Transverse colon (tissue), 4 donors: ENCODE measurements at regions of chr19 and their contacts with region 1.

Region 1: GRCh38 chr19:50252111-50252886 is 48.9 kb downstream of the MYH14 start:
- DNase-seq: peak; percentile 26
- H3K4me3 ChIP-seq: no peak overlapping the region
- H3K27ac ChIP-seq: no peak overlapping the region
- H3K4me1 ChIP-seq: no peaks in the 10 kb centered on the region
- H3K27me3 ChIP-seq: no peaks in the 10 kb centered on the region
- CTCF ChIP-seq: peak; percentile 39 to 62 (median 55)
- EP300 ChIP-seq: no peak
- POLR2A ChIP-seq: no peak

Region 2: GRCh38 chr19:49929611-49930482 is 322.5 kb before region 1 on chr19:
- in situ Hi-C with region 1: no loop called
- intact Hi-C with region 1: no loop called
- DNase-seq: peak; percentile 95
- H3K4me3 ChIP-seq: peak overlapping the region; percentile 88 to 99 (median 94)
- H3K27ac ChIP-seq: peak overlapping the region; percentile 94 to 99 (median 96)
- H3K4me1 ChIP-seq: peaks cover 6 to 22% (median 14%) of the 10 kb centered on the region in 4 donors
- H3K27me3 ChIP-seq: no peaks in the 10 kb centered on the region
- CTCF ChIP-seq: peak in 3 of 5 experiments; percentile 11 to 46 (median 41)
- EP300 ChIP-seq: no peak
- POLR2A ChIP-seq: peak; percentile 90

Region 3: DNA sequence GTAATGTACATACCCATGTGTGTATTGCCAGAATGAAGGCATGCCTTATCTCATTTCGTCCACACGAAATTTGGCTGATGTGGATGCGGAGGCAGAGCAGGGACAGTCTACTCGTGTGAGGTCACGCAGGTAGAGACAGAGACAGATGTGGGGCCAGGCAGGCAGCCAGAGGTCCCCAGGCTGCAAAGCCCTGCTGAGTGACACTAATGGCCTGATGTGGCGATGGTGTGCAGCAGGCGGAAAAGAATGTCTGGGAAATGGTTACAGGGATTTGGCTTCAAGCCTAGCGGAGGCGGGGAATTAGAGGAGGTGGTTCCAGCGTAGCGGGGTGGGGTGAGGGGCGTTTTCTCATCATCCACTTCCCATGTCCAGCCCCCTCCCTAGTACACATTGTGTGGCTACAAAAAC is 85.0 kb before region 1 on chr19:
- in situ Hi-C with region 1: loop called in 1 of 4 experiments (anchors 25 kb)
- intact Hi-C with region 1: no loop called
- DNase-seq: peak; percentile 67
- H3K4me3 ChIP-seq: no peak overlapping the region
- H3K27ac ChIP-seq: peak overlapping the region in 3 of 4 donors; percentile 15 to 49 (median 38)
- H3K4me1 ChIP-seq: peaks cover 0 to 29% (median 11%) of the 10 kb centered on the region in 4 donors
- H3K27me3 ChIP-seq: peaks cover 16% of the 10 kb centered on the region
- CTCF ChIP-seq: no peak
- EP300 ChIP-seq: no peak
- POLR2A ChIP-seq: no peak

Region 4: GRCh38 chr19:50476224-50476942 is 224.1 kb after region 1 on chr19 and contains the starts of genes EMC10 and GARIN5A:
- in situ Hi-C with region 1: no loop called
- intact Hi-C with region 1: no loop called
- DNase-seq: peak; percentile 94
- H3K4me3 ChIP-seq: peak within 1 kb of the TSS; percentile 76 to 96 (median 79)
- H3K27ac ChIP-seq: peak within 1 kb of the TSS; percentile 87 to 88 (median 88)
- H3K4me1 ChIP-seq: peaks cover 6 to 16% (median 10%) of the 10 kb centered on the region in 4 donors
- H3K27me3 ChIP-seq: no peaks in the 10 kb centered on the region
- CTCF ChIP-seq: peak in 1 of 5 experiments; percentile 25
- EP300 ChIP-seq: peak; percentile 18
- POLR2A ChIP-seq: peak; percentile 84
- total RNA-seq, gene EMC10: 50.5 to 117 (median 78.7) TPM
- total RNA-seq, gene GARIN5A: 0.55 to 4.2 (median 0.79) TPM in 3 of 4 donors, not detected in the other